GM12878 (cell line): ENCODE measurements at regions of chr18 and their contacts with region 1.

Region 1: DNA sequence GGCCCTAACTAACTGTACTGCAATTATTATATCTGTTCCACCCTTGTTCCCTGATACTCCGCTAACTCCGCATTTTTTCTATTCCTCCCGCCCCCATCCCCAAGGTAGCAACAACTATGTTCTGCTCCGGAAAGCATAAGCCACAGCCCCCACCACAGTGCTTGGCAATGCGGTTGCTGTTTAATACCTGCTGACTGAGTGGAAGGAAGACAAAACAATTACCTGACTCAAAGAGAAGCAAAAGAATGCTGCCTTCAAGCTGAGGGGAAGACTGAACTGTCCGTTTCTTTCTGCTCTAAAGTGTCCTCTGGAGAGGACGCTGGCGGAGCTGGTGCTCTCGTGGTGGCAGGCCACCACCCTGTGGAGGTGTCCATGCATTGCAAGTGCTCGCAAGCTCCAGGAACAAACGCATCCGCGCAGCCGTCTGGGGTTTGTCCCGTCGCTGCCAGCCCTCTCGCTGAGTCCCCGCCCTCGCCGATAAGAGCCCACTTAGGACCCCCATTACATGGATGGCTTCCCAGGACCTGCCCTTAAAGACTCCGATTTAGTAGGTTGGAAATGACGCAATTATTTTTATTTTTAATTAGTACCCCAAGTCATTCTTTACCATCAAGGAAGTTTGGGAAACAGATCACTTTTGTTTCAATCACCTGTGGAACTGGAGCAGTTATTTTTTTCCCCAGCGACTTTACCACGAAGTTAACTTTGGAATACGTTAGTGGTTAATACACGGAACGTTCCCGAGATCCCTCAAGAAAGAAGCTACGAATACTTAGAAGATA is 1.6 kb upstream of the MYL12A start:
- DNase-seq: no peak
- ATAC-seq: peak; percentile 71
- H3K4me3 ChIP-seq: peak overlapping the region; percentile 91
- H3K27ac ChIP-seq: peak overlapping the region; percentile 95
- H3K4me1 ChIP-seq: no peaks in the 10 kb centered on the region
- H3K27me3 ChIP-seq: no peaks in the 10 kb centered on the region
- CTCF ChIP-seq: peak; percentile 98 to 99 (median 98)
- EP300 ChIP-seq: 0 out of 4 replicates have a peak, but pooled peaks of 1 of the 2 experiments have one; percentile 38
- POLR2A ChIP-seq: peak; percentile 60
- RAD21 ChIP-seq: peak; percentile 96

Region 2: DNA sequence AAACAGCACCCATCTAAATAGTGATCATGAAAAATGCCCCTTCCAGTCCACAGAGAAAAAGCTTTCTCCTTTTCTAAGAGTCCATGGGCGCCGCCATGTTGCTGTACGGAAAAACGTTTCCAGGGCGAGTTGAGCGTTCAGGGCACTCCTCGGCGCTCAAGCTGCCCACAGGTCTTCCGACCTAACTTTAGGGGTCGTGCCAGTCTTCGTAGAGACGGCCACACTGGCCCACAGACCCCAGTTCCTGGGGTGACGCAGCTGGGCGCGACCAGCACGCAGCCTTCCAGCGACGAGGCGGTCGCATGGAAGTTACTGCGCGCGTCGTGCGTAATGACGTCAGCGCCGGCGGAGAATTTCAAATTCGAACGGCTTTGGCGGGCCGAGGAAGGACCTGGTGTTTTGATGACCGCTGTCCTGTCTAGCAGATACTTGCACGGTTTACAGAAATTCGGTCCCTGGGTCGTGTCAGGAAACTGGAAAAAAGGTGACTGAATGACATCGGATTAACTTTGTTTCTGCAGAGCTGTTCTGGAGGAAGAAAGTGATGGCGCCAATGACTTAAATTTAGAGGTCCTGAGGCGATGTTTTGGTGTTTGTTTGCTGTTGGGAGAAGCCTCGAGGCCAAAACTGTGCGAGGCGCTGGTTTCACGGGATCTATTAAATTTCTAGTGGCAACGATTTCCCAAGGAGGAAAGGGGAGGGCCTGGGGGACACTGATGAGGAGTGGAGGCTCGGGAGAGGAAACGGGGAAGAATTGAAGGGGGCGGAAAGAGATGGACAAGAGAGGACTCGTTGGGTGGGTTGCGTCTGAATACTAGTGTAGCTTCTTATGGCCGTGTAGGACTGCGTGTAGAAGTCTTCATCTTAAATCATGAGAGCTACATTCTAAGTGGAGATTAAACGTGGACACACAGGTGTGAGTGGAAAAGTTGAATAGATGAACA is 674.6 kb before region 1 on chr18 and contains the starts of genes METTL4 and NDC80:
- CTCF ChIA-PET with region 1: no interaction called
- POLR2A ChIA-PET with region 1: no interaction called
- RAD21 ChIA-PET with region 1: no interaction called
- SMC1A ChIA-PET with region 1: no interaction called
- in situ Hi-C with region 1: no loop called
- intact Hi-C with region 1: loop called (anchors 5 kb)
- DNase-seq: peak; percentile 71
- ATAC-seq: peak; percentile 82
- H3K4me3 ChIP-seq: peak within 1 kb of the TSS; percentile 82
- H3K27ac ChIP-seq: peak within 1 kb of the TSS; percentile 100
- H3K4me1 ChIP-seq: peaks cover 5% of the 10 kb centered on the region
- H3K27me3 ChIP-seq: no peaks in the 10 kb centered on the region
- CTCF ChIP-seq: 0 out of 6 replicates have a peak, but pooled peaks of 1 of the 3 experiments have one; percentile 12
- EP300 ChIP-seq: no peak
- POLR2A ChIP-seq: peak; percentile 87
- RAD21 ChIP-seq: no peak
- polyA plus RNA-seq, gene METTL4: 7.6 to 13.3 TPM
- polyA plus RNA-seq, gene NDC80: 54.4 to 55.0 TPM

Region 3: GRCh38 chr18:2948038-2948437 is 298.0 kb before region 1 on chr18:
- CTCF ChIA-PET with region 1: interaction called, 11 read pairs
- POLR2A ChIA-PET with region 1: interaction called, 3 read pairs
- RAD21 ChIA-PET with region 1: interaction called, 6 read pairs
- SMC1A ChIA-PET with region 1: interaction called, 11 read pairs
- in situ Hi-C with region 1: no loop called
- intact Hi-C with region 1: no loop called
- DNase-seq: no peak
- ATAC-seq: no peak
- H3K4me3 ChIP-seq: no peak overlapping the region
- H3K27ac ChIP-seq: no peak overlapping the region
- H3K4me1 ChIP-seq: no peaks in the 10 kb centered on the region
- H3K27me3 ChIP-seq: no peaks in the 10 kb centered on the region
- CTCF ChIP-seq: no peak; a peak in 1 of 6 replicates
- EP300 ChIP-seq: no peak
- POLR2A ChIP-seq: no peak
- RAD21 ChIP-seq: no peak

Region 4: GRCh38 chr18:2978646-2979045 is 267.4 kb before region 1 on chr18:
- CTCF ChIA-PET with region 1: interaction called, 17 read pairs
- POLR2A ChIA-PET with region 1: interaction called, 15 read pairs
- RAD21 ChIA-PET with region 1: interaction called, 22 read pairs
- SMC1A ChIA-PET with region 1: interaction called, 22 read pairs
- in situ Hi-C with region 1: no loop called
- intact Hi-C with region 1: loop called (anchors 5 kb)
- DNase-seq: no peak
- ATAC-seq: peak; percentile 16
- H3K4me3 ChIP-seq: peak overlapping the region; percentile 41; the same call in 1 of the 2 replicates
- H3K27ac ChIP-seq: peak overlapping the region; percentile 70
- H3K4me1 ChIP-seq: peaks cover 41% of the 10 kb centered on the region
- H3K27me3 ChIP-seq: no peaks in the 10 kb centered on the region
- CTCF ChIP-seq: no peak
- EP300 ChIP-seq: no peak
- POLR2A ChIP-seq: no peak
- RAD21 ChIP-seq: no peak

Region 5: GRCh38 chr18:3012964-3013804 is 232.9 kb before region 1 on chr18 and contains the start of gene LPIN2:
- CTCF ChIA-PET with region 1: interaction called, 10 read pairs
- POLR2A ChIA-PET with region 1: interaction called, 3 read pairs
- RAD21 ChIA-PET with region 1: no interaction called
- SMC1A ChIA-PET with region 1: interaction called, 7 read pairs
- in situ Hi-C with region 1: no loop called
- intact Hi-C with region 1: loop called (anchors 2 kb)
- DNase-seq: peak; percentile 71
- ATAC-seq: peak; percentile 88
- H3K4me3 ChIP-seq: peak within 1 kb of the TSS; percentile 74
- H3K27ac ChIP-seq: peak within 1 kb of the TSS; percentile 71
- H3K4me1 ChIP-seq: peaks cover 14% of the 10 kb centered on the region
- H3K27me3 ChIP-seq: no peaks in the 10 kb centered on the region
- CTCF ChIP-seq: no peak
- EP300 ChIP-seq: peak in 1 of 2 experiments; percentile 44; a peak in 1 of 4 replicates
- POLR2A ChIP-seq: peak; percentile 61; the same call in 1 of the 2 replicates
- RAD21 ChIP-seq: no peak
- polyA plus RNA-seq, gene LPIN2: 4.1 to 4.5 TPM

Region 6: DNA sequence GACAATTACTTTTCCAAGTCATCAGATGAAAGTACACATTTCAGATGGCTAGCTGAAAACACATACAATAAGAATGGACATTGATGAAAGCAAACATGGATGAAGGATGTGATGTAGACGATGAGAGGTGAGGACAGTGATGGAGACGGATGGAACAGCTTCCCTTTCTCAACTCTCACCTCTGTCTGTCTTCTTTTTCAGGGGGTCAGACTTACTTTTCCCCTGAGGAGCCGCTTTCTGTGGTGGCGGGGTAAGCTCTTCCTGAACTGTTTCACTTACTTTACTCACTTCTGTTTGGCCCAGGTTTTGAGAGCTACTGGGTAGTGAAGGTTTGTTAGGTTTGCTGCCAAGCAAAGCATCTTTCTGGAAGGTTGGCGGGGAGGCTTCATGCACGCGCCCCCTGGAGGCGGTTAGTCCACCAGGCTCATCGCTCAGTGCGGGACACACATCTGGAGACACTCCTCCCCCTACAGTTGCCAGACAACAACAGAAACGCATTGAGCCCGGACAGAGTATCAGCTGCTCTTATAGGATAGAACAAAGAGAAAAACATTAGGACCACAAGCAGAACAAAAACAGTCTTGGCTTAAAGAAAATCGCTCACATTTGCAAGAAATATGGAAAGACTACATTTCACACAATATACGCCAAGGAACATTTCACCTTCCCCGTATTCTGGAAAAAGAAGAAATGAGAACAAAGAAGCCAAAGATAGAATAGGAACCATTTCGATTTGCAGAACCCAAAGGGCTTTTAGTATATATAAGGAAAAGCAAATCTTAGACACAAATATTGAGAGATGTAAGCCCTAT is 116.8 kb before region 1 on chr18:
- CTCF ChIA-PET with region 1: interaction called, 25 read pairs
- POLR2A ChIA-PET with region 1: no interaction called
- RAD21 ChIA-PET with region 1: interaction called, 22 read pairs
- SMC1A ChIA-PET with region 1: interaction called, 20 read pairs
- in situ Hi-C with region 1: no loop called
- intact Hi-C with region 1: loop called (anchors 2 kb)
- DNase-seq: no peak
- ATAC-seq: peak; percentile 100
- H3K4me3 ChIP-seq: no peak overlapping the region
- H3K27ac ChIP-seq: no peak overlapping the region
- H3K4me1 ChIP-seq: no peaks in the 10 kb centered on the region
- H3K27me3 ChIP-seq: no peaks in the 10 kb centered on the region
- CTCF ChIP-seq: peak; percentile 92 to 95 (median 95)
- EP300 ChIP-seq: no peak
- POLR2A ChIP-seq: no peak
- RAD21 ChIP-seq: peak; percentile 48

Region 7: GRCh38 chr18:3209859-3210569 is 36.0 kb before region 1 on chr18:
- CTCF ChIA-PET with region 1: interaction called, 16 read pairs
- POLR2A ChIA-PET with region 1: no interaction called
- RAD21 ChIA-PET with region 1: interaction called, 10 read pairs
- SMC1A ChIA-PET with region 1: interaction called, 6 read pairs
- in situ Hi-C with region 1: no loop called
- intact Hi-C with region 1: no loop called
- DNase-seq: peak; percentile 20
- ATAC-seq: peak; percentile 97
- H3K4me3 ChIP-seq: no peak overlapping the region
- H3K27ac ChIP-seq: no peak overlapping the region
- H3K4me1 ChIP-seq: no peaks in the 10 kb centered on the region
- H3K27me3 ChIP-seq: no peaks in the 10 kb centered on the region
- CTCF ChIP-seq: no peak
- EP300 ChIP-seq: peak in 1 of 2 experiments; percentile 59; a peak in 1 of 4 replicates
- POLR2A ChIP-seq: no peak
- RAD21 ChIP-seq: no peak

Region 8: GRCh38 chr18:3424280-3424890 is 178.3 kb after region 1 on chr18:
- CTCF ChIA-PET with region 1: no interaction called
- POLR2A ChIA-PET with region 1: no interaction called
- RAD21 ChIA-PET with region 1: no interaction called
- SMC1A ChIA-PET with region 1: no interaction called
- in situ Hi-C with region 1: no loop called
- intact Hi-C with region 1: no loop called
- DNase-seq: no peak
- ATAC-seq: no peak
- H3K4me3 ChIP-seq: no peak overlapping the region
- H3K27ac ChIP-seq: no peak overlapping the region
- H3K4me1 ChIP-seq: no peaks in the 10 kb centered on the region
- H3K27me3 ChIP-seq: no peaks in the 10 kb centered on the region
- CTCF ChIP-seq: no peak
- EP300 ChIP-seq: no peak
- POLR2A ChIP-seq: no peak
- RAD21 ChIP-seq: no peak